CD4-positive, alpha-beta memory T cell (primary cell): ENCODE measurements at regions of chr22 and their contacts with region 1.

Region 1: GRCh38 chr22:31290494-31291471 is 1.5 kb downstream of the PIK3IP1 start:
- DNase-seq: peak; percentile 96 to 97 (median 96)
- H3K4me3 ChIP-seq: peak overlapping the region; percentile 89 to 99
- H3K4me3 Mint-ChIP-seq: peak overlapping the region; percentile 95 to 100 (median 98)
- H3K27ac ChIP-seq: peak overlapping the region; percentile 100
- H3K27ac Mint-ChIP-seq: peak overlapping the region; percentile 99 to 100 (median 100)
- H3K4me1 ChIP-seq: peaks cover 72% of the 10 kb centered on the region
- H3K4me1 Mint-ChIP-seq: peaks cover 41 to 83% (median 60%) of the 10 kb centered on the region in 4 donors
- H3K27me3 ChIP-seq: no peaks in the 10 kb centered on the region
- H3K27me3 Mint-ChIP-seq: no peaks in the 10 kb centered on the region

Region 2: DNA sequence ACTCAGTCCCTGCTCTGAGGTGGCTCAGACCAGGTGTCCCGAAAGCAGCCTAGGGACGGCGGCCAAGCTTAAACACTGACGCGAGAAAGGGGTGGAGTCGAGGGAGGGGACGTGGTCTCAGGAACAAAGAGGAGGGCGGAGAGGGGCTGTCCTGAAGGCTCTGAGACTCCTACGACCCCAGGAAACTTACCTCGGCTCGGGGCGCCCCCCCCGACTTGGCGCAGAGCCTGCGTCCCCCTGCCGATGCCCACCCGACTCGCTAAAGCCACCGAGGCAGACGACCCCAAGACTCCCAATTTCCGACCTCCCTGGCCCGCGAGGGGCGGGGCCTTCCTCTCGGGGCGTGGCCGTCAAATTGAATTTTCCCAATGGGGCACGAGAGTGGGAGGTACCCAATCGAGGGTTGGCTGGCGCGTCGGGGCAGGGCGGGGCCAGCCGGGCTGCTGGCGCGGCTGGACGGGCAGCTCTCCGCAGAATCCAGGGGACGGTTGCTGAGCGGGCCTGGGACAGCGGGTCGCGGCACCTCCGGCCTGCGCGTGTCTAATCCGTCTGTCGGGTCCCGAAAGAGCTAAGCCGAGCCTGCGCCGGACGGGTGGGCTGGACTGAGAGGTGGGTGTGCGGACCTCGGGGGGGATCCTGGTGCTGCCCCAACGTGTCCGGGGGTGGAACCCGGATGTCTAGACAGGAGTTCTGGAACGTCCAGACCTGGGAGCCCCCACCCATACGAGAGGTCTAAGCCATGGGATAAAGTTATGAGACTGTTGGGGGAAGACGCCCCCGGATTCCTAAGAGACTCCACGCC is 209.7 kb before region 1 on chr22 and contains the start of gene SMTN:
- CTCF ChIA-PET with region 1: no interaction called
- POLR2A ChIA-PET with region 1: interaction called, 10 read pairs
- intact Hi-C with region 1: no loop called
- DNase-seq: peak; percentile 82 to 86 (median 84)
- H3K4me3 ChIP-seq: peak within 1 kb of the TSS; percentile 0 to 71
- H3K4me3 Mint-ChIP-seq: peak within 1 kb of the TSS; percentile 85 to 92 (median 90)
- H3K27ac ChIP-seq: peak within 1 kb of the TSS; percentile 25
- H3K27ac Mint-ChIP-seq: peak within 1 kb of the TSS; percentile 52 to 87 (median 73)
- H3K4me1 ChIP-seq: peaks cover 43% of the 10 kb centered on the region
- H3K4me1 Mint-ChIP-seq: peaks cover 18 to 40% (median 28%) of the 10 kb centered on the region in 4 donors
- H3K27me3 ChIP-seq: no peaks in the 10 kb centered on the region
- H3K27me3 Mint-ChIP-seq: no peaks in the 10 kb centered on the region
- total RNA-seq, gene SMTN: 1.6 to 1.7 TPM

Region 3: DNA sequence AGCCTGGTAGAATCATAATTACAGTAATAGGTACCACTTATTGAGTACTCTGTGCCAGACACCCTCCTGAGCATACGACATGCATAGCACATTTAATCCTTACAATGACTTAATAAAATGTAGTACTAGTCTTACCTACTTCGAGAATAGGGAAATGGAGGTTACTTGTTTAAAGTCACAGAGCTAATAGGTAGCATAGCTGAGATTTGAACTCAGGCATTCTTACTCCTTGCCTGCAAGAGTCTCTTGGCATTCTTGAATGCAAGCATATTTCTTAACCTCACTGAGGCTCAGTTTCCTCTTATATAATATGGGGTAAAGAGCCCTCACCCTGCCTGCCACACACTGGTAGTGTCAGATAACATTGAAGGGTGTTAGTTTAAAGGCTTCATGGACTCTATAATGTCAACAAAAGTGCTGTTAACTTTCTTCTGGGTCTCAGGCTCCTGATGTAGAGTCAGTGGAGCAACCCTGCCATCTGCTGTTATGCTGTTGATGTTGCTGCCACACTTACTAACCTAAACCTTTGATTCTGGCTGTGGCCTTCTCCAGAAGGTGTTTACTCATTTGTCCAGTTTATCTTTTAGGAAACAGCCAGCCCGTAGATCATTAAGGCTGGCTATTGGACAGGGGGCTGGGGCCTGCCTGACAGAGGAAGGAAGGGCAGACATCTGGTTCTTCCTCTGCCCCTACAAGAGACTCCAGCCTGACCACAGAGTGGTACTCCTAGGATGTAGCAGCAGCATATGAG is 59.7 kb before region 1 on chr22:
- CTCF ChIA-PET with region 1: interaction called, 3 read pairs
- POLR2A ChIA-PET with region 1: interaction called, 13 read pairs
- intact Hi-C with region 1: no loop called
- DNase-seq: peak; percentile 60 to 65 (median 61)
- H3K4me3 ChIP-seq: no peak overlapping the region
- H3K4me3 Mint-ChIP-seq: peak overlapping the region in 6 of 8 donors; percentile 21 to 84 (median 56)
- H3K27ac ChIP-seq: peak overlapping the region; percentile 43
- H3K27ac Mint-ChIP-seq: peak overlapping the region; percentile 81 to 96 (median 92)
- H3K4me1 ChIP-seq: peaks cover 30% of the 10 kb centered on the region
- H3K4me1 Mint-ChIP-seq: peaks cover 36 to 68% (median 54%) of the 10 kb centered on the region in 4 donors
- H3K27me3 ChIP-seq: no peaks in the 10 kb centered on the region
- H3K27me3 Mint-ChIP-seq: no peaks in the 10 kb centered on the region

Region 4: DNA sequence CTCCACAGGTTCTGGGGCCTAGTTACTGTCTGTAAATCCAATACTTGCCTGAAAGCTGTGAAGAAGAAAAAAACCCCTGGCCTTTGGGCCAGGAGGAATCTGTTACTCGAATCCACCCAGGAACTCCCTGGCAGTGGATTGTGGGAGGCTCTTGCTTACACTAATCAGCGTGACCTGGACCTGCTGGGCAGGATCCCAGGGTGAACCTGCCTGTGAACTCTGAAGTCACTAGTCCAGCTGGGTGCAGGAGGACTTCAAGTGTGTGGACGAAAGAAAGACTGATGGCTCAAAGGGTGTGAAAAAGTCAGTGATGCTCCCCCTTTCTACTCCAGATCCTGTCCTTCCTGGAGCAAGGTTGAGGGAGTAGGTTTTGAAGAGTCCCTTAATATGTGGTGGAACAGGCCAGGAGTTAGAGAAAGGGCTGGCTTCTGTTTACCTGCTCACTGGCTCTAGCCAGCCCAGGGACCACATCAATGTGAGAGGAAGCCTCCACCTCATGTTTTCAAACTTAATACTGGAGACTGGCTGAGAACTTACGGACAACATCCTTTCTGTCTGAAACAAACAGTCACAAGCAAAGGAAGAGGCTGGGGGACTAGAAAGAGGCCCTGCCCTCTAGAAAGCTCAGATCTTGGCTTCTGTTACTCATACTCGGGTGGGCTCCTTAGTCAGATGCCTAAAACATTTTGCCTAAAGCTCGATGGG is 12.0 kb before region 1 on chr22:
- CTCF ChIA-PET with region 1: interaction called, 140 read pairs
- POLR2A ChIA-PET with region 1: interaction called, 1,203 read pairs
- intact Hi-C with region 1: loop called (anchors 1 kb)
- DNase-seq: peak; percentile 64 to 76 (median 73)
- H3K4me3 ChIP-seq: peak overlapping the region in 1 of 2 donors; percentile 17
- H3K4me3 Mint-ChIP-seq: peak overlapping the region; percentile 38 to 84 (median 77)
- H3K27ac ChIP-seq: peak overlapping the region; percentile 43
- H3K27ac Mint-ChIP-seq: peak overlapping the region; percentile 94 to 99 (median 97)
- H3K4me1 ChIP-seq: peaks cover 87% of the 10 kb centered on the region
- H3K4me1 Mint-ChIP-seq: peaks cover 57 to 92% (median 73%) of the 10 kb centered on the region in 4 donors
- H3K27me3 ChIP-seq: no peaks in the 10 kb centered on the region
- H3K27me3 Mint-ChIP-seq: no peaks in the 10 kb centered on the region

Region 5: DNA sequence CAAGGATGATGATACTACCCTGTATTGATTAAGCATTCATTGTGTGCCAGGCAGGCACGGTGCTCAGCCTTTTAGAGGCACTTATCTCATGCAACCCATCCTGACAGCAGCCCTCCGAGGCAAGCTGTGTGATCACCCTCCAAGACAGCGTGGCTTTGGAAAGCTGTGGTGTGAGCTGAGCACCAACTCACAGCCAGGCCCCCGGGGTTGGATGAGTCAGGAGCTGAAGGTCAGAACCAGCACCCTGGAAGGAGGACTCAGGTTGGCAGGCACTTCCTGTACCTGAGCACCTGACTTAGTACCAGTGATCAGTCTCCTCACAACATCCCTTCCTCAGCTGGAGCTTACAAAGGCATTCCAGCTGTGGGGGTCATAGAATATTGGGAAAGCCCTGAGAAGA is 46.4 kb after region 1 on chr22:
- CTCF ChIA-PET with region 1: no interaction called
- POLR2A ChIA-PET with region 1: interaction called, 179 read pairs
- intact Hi-C with region 1: no loop called
- DNase-seq: no peak
- H3K4me3 ChIP-seq: no peak overlapping the region
- H3K4me3 Mint-ChIP-seq: no peak overlapping the region
- H3K27ac ChIP-seq: no peak overlapping the region
- H3K27ac Mint-ChIP-seq: peak overlapping the region in 4 of 7 donors; percentile 36 to 62 (median 54)
- H3K4me1 ChIP-seq: peaks cover 35% of the 10 kb centered on the region
- H3K4me1 Mint-ChIP-seq: peaks cover 26 to 66% (median 51%) of the 10 kb centered on the region in 4 donors
- H3K27me3 ChIP-seq: no peaks in the 10 kb centered on the region
- H3K27me3 Mint-ChIP-seq: no peaks in the 10 kb centered on the region

Region 6: GRCh38 chr22:31630331-31631329 is 339.8 kb after region 1 on chr22:
- CTCF ChIA-PET with region 1: interaction called, 3 read pairs
- POLR2A ChIA-PET with region 1: interaction called, 11 read pairs
- intact Hi-C with region 1: loop called (anchors 5 kb)
- DNase-seq: peak; percentile 88 to 94 (median 89)
- H3K4me3 ChIP-seq: peak overlapping the region; percentile 29 to 69
- H3K4me3 Mint-ChIP-seq: peak overlapping the region; percentile 86 to 89 (median 88)
- H3K27ac ChIP-seq: peak overlapping the region; percentile 86
- H3K27ac Mint-ChIP-seq: peak overlapping the region; percentile 88 to 96 (median 94)
- H3K4me1 ChIP-seq: peaks cover 56% of the 10 kb centered on the region
- H3K4me1 Mint-ChIP-seq: peaks cover 20 to 66% (median 39%) of the 10 kb centered on the region in 4 donors
- H3K27me3 ChIP-seq: no peaks in the 10 kb centered on the region
- H3K27me3 Mint-ChIP-seq: no peaks in the 10 kb centered on the region